ENCODE measurements at regions of chr1 and their contacts with region 1.

Region 1: DNA sequence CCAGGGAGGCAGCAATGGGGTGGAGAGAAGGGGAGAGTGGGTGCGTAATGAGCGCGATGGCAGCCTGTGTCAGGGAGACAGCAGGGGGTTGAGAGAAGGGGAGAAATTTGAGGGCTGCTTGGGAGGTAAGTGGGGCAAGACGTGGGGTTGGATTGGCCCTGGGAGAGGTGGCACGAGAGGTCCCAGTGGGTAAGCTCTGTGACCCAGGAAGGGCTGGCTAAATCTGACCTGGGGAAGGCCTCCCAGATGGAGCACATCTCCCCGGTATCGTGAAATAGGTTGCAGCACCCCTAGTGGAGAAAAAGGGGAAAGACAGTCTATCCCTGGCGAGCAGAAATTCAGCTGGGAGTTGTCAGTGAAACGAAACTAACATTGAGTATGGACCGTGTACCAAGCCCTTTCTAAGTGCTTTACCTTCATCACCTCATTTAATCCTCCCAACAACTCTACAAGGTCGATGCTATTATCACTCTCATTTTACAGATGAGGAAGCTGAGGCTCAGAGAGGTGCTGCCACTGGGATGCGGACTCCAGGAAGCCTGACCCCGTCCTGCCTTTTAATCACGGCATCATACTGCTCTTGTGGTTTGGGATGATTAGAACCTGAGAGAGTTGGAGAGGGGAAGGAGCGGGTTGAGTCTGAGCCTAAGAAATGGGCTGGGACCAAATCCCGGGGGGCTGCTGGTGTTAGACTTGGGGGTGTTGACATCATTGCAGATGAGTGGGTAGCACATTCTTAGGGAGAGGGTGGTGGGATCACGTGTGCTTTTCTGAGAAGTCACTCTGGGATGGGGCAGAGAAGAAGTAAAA is 56.6 kb upstream of the RPL11 start:
- DNase-seq: peak; percentile 62
- H3K4me3 Mint-ChIP-seq: peak overlapping the region; percentile 2
- H3K27ac Mint-ChIP-seq: no peak overlapping the region
- H3K4me1 Mint-ChIP-seq: peaks cover 22% of the 10 kb centered on the region
- H3K27me3 Mint-ChIP-seq: peaks cover 15% of the 10 kb centered on the region

Region 2: GRCh38 chr1:23496490-23497181 is 138.4 kb before region 1 on chr1:
- intact Hi-C with region 1: loop called (anchors 1 kb)
- DNase-seq: no peak
- H3K4me3 Mint-ChIP-seq: no peak overlapping the region
- H3K27ac Mint-ChIP-seq: no peak overlapping the region
- H3K4me1 Mint-ChIP-seq: no peaks in the 10 kb centered on the region
- H3K27me3 Mint-ChIP-seq: peaks cover 4% of the 10 kb centered on the region

Region 3: DNA sequence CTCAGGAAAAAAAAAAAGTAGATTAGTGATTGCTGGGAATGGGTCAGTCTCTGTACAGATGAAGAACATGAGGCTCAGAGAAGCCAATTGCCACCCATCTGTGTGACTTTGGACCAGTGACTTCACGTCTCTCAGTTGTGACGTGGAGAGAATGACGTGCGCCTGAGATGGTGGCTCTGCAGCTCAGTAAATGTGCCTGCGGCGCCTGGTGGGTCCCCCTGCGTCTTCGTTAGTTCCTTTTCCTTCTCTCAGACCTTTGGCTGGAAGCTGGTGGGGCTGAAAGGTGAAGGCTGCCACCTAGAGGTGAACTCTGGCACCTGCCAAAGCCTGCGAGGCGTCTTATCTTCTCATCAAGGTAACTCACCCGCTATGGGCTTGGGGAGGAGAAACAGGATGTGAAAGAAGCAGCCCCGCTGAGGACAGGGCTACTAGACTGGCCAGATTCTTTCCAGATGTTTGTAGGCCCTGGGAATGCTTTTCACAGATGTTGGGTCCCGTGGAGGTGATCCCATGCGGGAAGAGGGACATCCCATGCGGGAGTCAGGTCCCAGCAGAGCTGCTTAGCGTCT is 95.3 kb before region 1 on chr1:
- intact Hi-C with region 1: loop called (anchors 1 kb)
- DNase-seq: peak; percentile 90
- H3K4me3 Mint-ChIP-seq: peak overlapping the region; percentile 31
- H3K27ac Mint-ChIP-seq: peak overlapping the region; percentile 24
- H3K4me1 Mint-ChIP-seq: peaks cover 23% of the 10 kb centered on the region
- H3K27me3 Mint-ChIP-seq: no peaks in the 10 kb centered on the region

Region 4: GRCh38 chr1:23577056-23578004 is 57.7 kb before region 1 on chr1:
- intact Hi-C with region 1: loop called (anchors 1 kb)
- DNase-seq: no peak
- H3K4me3 Mint-ChIP-seq: peak overlapping the region; percentile 45
- H3K27ac Mint-ChIP-seq: peak overlapping the region; percentile 61
- H3K4me1 Mint-ChIP-seq: peaks cover 30% of the 10 kb centered on the region
- H3K27me3 Mint-ChIP-seq: peaks cover 2% of the 10 kb centered on the region

Region 5: GRCh38 chr1:23591460-23592208 is 43.4 kb before region 1 on chr1:
- intact Hi-C with region 1: loop called (anchors 5 kb)
- DNase-seq: no peak
- H3K4me3 Mint-ChIP-seq: peak overlapping the region; percentile 53
- H3K27ac Mint-ChIP-seq: peak overlapping the region; percentile 93
- H3K4me1 Mint-ChIP-seq: peaks cover 46% of the 10 kb centered on the region
- H3K27me3 Mint-ChIP-seq: peaks cover 2% of the 10 kb centered on the region

Region 6: GRCh38 chr1:23619299-23620188 is 15.5 kb before region 1 on chr1:
- intact Hi-C with region 1: loop called (anchors 2 kb)
- DNase-seq: peak; percentile 55
- H3K4me3 Mint-ChIP-seq: peak overlapping the region; percentile 67
- H3K27ac Mint-ChIP-seq: peak overlapping the region; percentile 69
- H3K4me1 Mint-ChIP-seq: peaks cover 72% of the 10 kb centered on the region
- H3K27me3 Mint-ChIP-seq: no peaks in the 10 kb centered on the region

Measured in activated T-helper 1 cell treated with anti-CD3 and anti-CD28 coated beads, Interleukin-12 subunit alpha, Interleukin-12 subunit beta, Interleukin-2, Interleukin-4 antibody, amounts not matched to agents 30 ng/mL and 10 ng/mL and 1 ng/mL, durations not matched to agents 14 hours and 24 hours and 36 hours (primary cell).